A673 (cell line): ENCODE measurements at regions of chr4 and their contacts with region 1.

Region 1: DNA sequence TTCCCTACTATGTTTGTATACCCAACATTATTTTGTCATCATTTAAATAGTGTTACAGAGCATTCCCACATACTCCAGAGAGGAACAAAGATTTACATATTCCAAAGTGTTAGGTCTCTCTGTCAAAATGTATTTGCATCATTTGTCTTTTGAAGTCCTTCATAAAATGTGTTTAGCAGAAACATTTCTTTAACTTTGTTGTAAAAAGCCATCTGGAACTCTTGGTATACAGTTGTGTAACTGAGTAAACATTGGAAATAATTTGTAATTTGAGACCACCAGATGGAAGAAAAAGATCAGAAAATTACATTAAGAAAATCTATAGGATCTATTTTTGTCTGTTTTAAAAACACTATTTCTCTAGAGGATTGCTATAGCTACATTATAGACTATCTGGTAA is 56.6 kb upstream of the ALB start:
- DNase-seq: no peak
- H3K4me3 ChIP-seq: no peak overlapping the region
- H3K27ac ChIP-seq: no peak overlapping the region
- H3K4me1 ChIP-seq: no peaks in the 10 kb centered on the region
- H3K27me3 ChIP-seq: no peaks in the 10 kb centered on the region
- CTCF ChIP-seq: no peak

Region 2: DNA sequence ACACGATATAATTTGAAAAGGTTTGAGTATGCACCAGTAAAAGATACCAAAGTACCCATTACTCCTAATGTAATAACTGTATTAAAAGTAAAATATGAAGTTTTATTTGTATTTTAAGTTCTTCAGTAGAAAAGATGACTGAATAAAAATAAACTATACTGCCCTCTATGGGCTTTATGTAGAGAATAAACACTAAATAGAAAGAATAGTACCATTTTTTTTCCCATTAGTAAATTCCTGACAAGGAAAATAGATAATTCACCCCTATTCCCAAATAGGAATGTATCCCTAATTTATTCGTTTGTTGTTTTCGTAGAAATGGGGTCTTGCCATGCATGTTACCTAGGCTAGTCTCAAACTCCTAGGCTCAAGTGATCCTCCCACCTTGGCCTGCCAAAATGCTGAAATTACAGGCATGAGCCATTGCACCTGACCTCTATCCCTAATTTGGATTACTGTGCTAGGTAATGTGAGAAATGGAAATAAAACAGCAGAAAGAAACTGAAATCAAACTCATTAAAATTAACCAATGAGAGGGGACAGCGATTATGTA is 204.4 kb before region 1 on chr4:
- CTCF ChIA-PET with region 1: no interaction called
- POLR2A ChIA-PET with region 1: no interaction called
- intact Hi-C with region 1: no loop called
- DNase-seq: no peak
- H3K4me3 ChIP-seq: no peak overlapping the region
- H3K27ac ChIP-seq: no peak overlapping the region
- H3K4me1 ChIP-seq: no peaks in the 10 kb centered on the region
- H3K27me3 ChIP-seq: no peaks in the 10 kb centered on the region
- CTCF ChIP-seq: peak; percentile 26; the same call in 1 of the 2 replicates

Region 3: DNA sequence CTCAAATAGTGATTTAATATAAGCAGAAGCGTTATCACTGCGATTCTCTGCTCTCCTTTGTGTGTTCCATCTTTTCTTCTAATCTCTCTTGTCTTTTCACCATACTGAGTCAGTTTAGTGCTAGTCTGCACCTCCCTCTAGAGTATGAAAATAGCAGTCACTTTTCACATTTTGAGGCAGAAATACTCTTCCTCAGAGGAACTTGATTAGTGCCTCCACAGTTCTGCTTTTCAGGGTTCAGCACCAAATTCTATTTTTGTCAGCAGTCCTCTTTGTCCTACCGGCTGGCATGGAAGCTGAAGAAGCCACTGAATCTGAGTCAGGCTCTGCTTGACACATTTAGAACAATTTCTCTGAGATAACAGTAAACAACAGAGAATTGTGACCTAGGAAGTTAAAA is 39.2 kb before region 1 on chr4:
- CTCF ChIA-PET with region 1: no interaction called
- POLR2A ChIA-PET with region 1: no interaction called
- intact Hi-C with region 1: no loop called
- DNase-seq: no peak
- H3K4me3 ChIP-seq: no peak overlapping the region
- H3K27ac ChIP-seq: no peak overlapping the region
- H3K4me1 ChIP-seq: no peaks in the 10 kb centered on the region
- H3K27me3 ChIP-seq: no peaks in the 10 kb centered on the region
- CTCF ChIP-seq: no peak

Region 4: DNA sequence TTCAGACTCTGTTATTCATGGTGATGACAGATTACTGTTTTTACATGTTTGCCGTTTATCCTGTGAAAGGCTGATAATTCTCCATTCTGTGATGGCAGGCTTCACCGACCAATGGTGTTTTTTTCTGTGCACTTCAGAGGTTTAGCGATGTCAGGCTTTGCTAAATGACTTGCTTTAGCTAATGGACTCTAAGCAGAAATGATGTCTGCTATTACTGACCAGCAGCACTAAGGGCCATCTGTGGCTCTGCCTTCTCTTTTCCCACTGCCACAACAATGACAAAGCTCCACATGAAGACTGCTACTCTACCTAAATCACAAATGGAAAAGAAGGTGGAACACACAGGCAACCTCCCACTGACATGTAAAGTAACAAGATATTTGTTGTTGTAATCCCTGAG is 11.8 kb before region 1 on chr4:
- CTCF ChIA-PET with region 1: no interaction called
- POLR2A ChIA-PET with region 1: interaction called, 10 read pairs
- intact Hi-C with region 1: no loop called
- DNase-seq: no peak
- H3K4me3 ChIP-seq: no peak overlapping the region
- H3K27ac ChIP-seq: no peak overlapping the region
- H3K4me1 ChIP-seq: no peaks in the 10 kb centered on the region
- H3K27me3 ChIP-seq: no peaks in the 10 kb centered on the region
- CTCF ChIP-seq: no peak

Region 5: GRCh38 chr4:73803213-73803612 is 455.7 kb after region 1 on chr4:
- CTCF ChIA-PET with region 1: no interaction called
- POLR2A ChIA-PET with region 1: no interaction called
- intact Hi-C with region 1: no loop called
- DNase-seq: no peak
- H3K4me3 ChIP-seq: no peak overlapping the region
- H3K27ac ChIP-seq: no peak overlapping the region
- H3K4me1 ChIP-seq: no peaks in the 10 kb centered on the region
- H3K27me3 ChIP-seq: no peaks in the 10 kb centered on the region
- CTCF ChIP-seq: no peak